ENCODE measurements at regions of chr1 and their contacts with region 1.

Region 1: DNA sequence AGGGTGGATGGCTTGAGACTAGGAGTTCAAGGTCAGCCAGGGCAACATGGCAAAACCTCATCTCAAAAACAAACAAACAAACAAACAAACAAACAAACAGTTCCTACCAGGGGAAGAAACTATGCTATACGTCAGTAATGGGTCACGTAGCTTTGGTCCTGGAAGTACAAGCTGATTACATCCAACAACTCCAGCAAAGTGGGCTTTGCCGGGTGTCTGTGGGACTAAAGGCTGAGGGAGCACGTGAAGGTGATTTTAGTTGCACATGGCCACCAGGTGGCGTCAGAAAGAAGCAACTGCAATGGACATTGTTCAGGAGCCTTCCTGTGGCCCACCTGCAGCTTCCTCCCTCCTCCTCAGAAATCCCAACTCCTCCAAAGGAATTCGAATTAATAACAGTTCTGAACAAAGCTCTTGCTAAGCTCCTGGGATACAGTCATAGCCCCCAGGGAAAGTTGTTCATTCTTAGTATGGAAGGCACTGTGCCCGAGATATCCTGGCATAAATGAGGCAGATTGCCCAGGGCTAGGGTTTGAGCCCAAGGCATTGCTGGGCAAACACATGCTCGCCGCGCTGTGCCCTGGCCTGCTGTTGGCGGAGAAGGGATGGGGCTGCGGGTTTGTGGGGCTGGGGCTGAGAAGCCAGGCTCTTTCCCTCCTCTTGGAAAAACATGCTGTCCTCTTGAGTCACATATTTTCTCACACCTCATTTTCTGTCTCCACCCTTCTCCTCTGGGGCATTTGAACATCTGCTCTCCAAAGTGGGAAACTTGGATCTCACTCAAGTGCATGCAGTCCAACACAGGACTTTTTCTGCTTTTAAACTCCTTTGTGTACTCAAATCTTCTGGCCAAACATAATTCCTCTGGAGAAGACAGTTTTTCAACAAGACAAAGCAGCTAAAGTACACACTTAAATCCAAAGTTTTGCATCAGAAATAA is 28.6 kb downstream of the AKNAD1 start:
- DNase-seq: peak; percentile 85
- H3K4me3 Mint-ChIP-seq: no peak overlapping the region
- H3K27ac Mint-ChIP-seq: no peak overlapping the region
- H3K4me1 Mint-ChIP-seq: peaks cover 8% of the 10 kb centered on the region
- H3K27me3 Mint-ChIP-seq: peaks cover 23% of the 10 kb centered on the region

Region 2: DNA sequence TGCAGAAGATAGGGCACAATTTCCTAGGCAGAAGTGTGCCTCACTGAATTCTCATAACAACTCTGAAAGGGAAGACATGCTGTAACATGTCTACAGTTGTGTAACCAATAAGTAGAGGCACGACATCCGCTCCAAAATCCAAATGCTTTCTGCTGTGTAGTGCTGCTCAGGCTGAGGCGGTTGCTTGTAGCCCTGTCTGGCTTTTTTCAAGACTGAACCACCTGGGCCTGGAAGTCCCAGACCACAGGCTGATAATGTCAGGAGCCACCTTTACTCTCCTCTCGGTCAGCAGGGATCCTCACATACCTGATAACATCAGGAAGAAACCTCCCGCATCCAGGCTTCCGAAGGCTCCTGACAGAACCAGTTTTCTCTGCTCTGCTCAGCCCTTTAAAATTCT is 17.7 kb after region 1 on chr1:
- CTCF ChIA-PET with region 1: interaction called, 17 read pairs
- DNase-seq: no peak
- H3K4me3 Mint-ChIP-seq: no peak overlapping the region
- H3K27ac Mint-ChIP-seq: no peak overlapping the region
- H3K4me1 Mint-ChIP-seq: peaks cover under 1% of the 10 kb centered on the region
- H3K27me3 Mint-ChIP-seq: peaks cover 49% of the 10 kb centered on the region

Region 3: DNA sequence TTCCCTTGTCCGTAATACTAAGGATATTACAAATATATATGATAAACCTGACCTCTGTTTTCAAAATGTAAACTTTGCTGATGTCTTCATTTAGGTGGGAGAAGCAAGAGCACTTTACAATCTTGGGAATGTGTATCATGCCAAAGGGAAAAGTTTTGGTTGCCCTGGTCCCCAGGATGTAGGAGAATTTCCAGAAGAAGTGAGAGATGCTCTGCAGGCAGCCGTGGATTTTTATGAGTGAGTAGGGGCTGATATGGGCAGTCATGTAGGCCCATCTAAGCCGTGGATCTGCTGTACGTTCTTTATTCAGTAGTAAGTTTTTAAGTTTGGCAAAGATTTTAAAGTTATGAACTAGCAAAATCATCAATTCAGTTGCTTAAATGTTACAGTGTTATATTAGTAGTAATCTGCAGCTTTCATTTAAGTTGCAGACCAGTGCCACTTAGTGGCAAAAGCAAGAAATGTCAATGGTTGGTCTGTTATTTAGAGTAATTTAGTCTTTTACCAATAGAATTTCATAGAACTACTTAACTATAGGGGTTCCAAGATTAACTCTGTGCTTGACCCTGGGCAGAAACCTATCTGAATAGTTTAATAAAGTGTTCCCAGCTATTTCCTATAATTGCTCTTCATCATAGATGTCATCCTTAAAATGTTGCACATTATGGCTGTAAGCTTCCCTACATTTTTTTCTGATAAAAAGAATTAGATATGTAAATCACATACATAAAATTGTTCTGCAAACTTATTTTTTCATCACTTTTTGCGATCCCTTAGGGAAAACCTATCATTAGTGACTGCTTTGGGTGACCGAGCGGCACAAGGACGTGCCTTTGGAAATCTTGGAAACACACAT is 69.8 kb after region 1 on chr1:
- CTCF ChIA-PET with region 1: interaction called, 148 read pairs
- DNase-seq: peak; percentile 40
- H3K4me3 Mint-ChIP-seq: no peak overlapping the region
- H3K27ac Mint-ChIP-seq: no peak overlapping the region
- H3K4me1 Mint-ChIP-seq: no peaks in the 10 kb centered on the region
- H3K27me3 Mint-ChIP-seq: no peaks in the 10 kb centered on the region

Measured in activated naive CD4-positive, alpha-beta T cell treated with anti-CD3 and anti-CD28 coated beads, Interleukin-2, amount 10 ng/mL, durations not matched to agents 7 days and 5 days (primary cell).